Gastrocnemius medialis (tissue), 4 donors: ENCODE measurements at regions of chr19 and their contacts with region 1.

Region 1: DNA sequence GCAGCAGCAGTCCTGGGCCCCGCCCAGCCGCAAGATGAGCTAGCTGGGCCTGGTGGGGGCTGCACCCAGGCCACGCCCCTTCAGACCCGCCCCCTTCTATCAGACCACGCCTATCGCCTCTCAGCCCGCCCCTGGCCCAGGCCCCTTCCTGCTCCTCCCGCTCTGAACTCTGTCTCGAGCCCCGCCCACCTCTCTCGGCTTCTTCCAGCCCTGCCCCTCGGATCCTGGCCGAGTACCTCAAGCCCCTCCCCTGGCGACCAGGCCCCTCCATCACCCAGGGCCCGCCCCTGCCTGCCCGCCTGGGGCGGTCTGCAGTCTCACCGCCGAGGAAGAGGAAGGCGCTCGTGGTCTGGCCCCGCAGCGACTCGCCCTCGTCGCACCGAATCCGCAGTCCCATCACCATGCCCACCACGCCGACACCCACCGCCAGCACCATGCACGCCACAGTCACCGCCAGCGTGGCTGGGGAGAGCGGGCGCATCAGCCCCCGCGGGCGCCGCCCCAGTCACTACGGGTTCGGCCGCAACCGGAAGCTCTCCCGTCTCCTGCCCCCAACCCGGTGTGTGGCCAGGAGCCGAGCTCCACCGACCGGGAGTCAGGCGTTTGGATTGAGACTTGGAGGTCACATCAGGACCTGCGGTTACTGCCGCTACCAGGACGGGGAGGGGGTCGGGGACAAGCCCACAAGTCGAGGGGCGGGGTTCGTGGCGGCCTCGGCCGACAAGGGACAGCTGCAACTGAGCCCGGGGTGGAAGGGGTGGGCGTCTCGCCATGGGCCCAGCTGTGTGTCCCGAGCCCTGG is 1.0 kb downstream of the CLDND2 start:
- DNase-seq: peak; percentile 96 to 98
- ATAC-seq: peak; percentile 64 to 71
- H3K4me3 ChIP-seq: peak overlapping the region; percentile 88 to 95 (median 92)
- H3K27ac ChIP-seq: peak overlapping the region; percentile 91 to 98 (median 94)
- H3K4me1 ChIP-seq: peaks cover 8 to 19% of the 10 kb centered on the region in 2 donors
- H3K27me3 ChIP-seq: no peaks in the 10 kb centered on the region
- CTCF ChIP-seq: no peak
- POLR2A ChIP-seq: no peak

Region 2: DNA sequence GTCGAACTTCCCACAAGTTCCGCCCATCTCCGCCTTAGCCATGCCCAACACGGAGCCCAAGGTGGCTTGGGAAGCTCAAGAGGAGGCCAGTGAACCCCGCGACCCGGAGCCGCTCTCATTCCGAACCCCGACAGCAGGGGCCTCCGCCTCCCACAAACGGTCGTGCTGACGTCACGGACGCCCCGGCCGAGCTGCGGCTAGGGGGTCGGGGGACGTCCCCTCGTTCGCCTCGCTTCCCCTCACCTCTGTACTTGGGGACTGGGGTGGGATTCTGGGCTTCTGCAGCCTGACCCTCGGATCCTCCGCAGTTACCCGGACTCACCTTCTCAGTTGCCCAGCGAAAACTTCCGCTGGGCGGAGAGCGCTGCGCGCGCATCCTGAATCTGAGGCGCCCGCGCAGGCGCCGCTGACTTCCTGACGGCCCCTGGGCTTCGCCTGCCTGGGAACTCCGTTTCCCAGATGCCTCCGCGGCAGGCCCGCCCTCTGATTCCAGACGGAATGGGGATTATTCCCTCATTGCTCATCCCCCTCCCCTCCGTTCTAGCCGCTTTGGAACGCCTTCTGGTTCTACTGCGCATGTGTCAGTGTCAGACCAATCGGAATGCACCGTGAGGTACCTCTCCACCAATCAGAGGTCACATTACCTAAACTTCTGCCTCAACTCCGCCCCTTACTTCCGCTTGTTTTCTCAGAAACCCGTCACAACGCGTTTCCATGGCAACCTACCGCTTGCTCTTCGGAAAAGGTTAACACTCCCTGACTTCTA is 1342.6 kb before region 1 on chr19 and contains the start of gene VRK3:
- in situ Hi-C with region 1: no loop called
- intact Hi-C with region 1: loop called (anchors 5 kb)
- DNase-seq: peak; percentile 99
- ATAC-seq: peak; percentile 99
- H3K4me3 ChIP-seq: peak within 1 kb of the TSS; percentile 93 to 99 (median 96)
- H3K27ac ChIP-seq: peak within 1 kb of the TSS; percentile 90 to 98 (median 94)
- H3K4me1 ChIP-seq: peaks cover 24 to 27% of the 10 kb centered on the region in 2 donors
- H3K27me3 ChIP-seq: no peaks in the 10 kb centered on the region
- CTCF ChIP-seq: no peak
- POLR2A ChIP-seq: peak; percentile 56 to 77
- total RNA-seq, gene VRK3: 36.0 to 52.8 (median 39.9) TPM

Region 3: GRCh38 chr19:50511068-50511822 is 856.5 kb before region 1 on chr19 and contains the start of gene JOSD2:
- in situ Hi-C with region 1: no loop called
- intact Hi-C with region 1: loop called (anchors 5 kb)
- DNase-seq: peak; percentile 95 to 98
- ATAC-seq: peak; percentile 92 to 94
- H3K4me3 ChIP-seq: peak within 1 kb of the TSS; percentile 87 to 92 (median 88)
- H3K27ac ChIP-seq: peak within 1 kb of the TSS; percentile 79 to 89 (median 85)
- H3K4me1 ChIP-seq: peaks cover 7 to 13% of the 10 kb centered on the region in 2 donors
- H3K27me3 ChIP-seq: peaks cover 0 to 4% (median 0%) of the 10 kb centered on the region in 3 donors
- CTCF ChIP-seq: peak in 2 of 5 experiments; percentile 21 to 22
- POLR2A ChIP-seq: peak; percentile 68 to 81
- total RNA-seq, gene JOSD2: 22.1 to 36.9 (median 27.8) TPM

Region 4: DNA sequence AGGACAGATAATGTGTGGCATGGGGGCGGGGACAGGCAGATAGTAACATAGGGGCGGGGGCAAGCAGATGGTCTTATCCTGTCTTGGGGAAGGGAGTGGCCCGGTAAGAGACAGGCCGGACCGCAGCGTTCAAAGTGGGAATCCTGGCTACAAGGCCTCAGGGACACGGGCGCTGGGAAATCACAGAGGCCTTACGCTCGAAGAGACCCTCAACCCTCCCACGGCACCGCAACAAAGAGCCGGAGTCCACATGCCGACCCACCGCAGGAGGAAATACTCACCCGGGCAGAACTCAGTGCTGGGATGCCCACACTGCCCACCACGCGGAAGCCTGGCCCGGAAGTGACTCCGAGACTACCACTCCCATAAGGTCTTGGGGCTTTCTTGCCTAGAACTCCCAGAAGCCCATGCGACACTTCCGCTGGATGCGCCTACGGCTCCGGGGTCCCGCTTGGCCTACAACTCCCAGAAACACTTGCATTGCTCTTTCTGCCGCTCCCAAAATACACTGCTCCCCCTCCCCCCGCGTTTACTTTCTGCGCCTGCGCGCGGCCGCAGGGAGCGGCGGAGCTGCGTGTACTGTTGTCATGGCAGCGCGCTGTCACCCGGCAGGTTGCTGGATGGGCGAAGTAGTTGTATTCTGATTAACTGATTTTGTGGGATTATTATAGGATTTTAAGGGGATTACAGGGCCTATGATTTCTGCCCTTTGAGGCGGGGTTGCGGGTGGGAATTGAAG is 259.5 kb before region 1 on chr19 and contains the start of gene CTU1:
- in situ Hi-C with region 1: no loop called
- intact Hi-C with region 1: loop called (anchors 5 kb)
- DNase-seq: peak; percentile 98 to 99
- ATAC-seq: peak; percentile 100
- H3K4me3 ChIP-seq: peak within 1 kb of the TSS; percentile 65 to 87 (median 76)
- H3K27ac ChIP-seq: peak within 1 kb of the TSS; percentile 68 to 77 (median 74)
- H3K4me1 ChIP-seq: peaks cover 8 to 14% of the 10 kb centered on the region in 2 donors
- H3K27me3 ChIP-seq: no peaks in the 10 kb centered on the region
- CTCF ChIP-seq: peak in 2 of 5 experiments; percentile 24 to 26
- POLR2A ChIP-seq: peak; percentile 34 to 63
- total RNA-seq, gene CTU1: 5.8 to 11.9 (median 9.3) TPM

Region 5: DNA sequence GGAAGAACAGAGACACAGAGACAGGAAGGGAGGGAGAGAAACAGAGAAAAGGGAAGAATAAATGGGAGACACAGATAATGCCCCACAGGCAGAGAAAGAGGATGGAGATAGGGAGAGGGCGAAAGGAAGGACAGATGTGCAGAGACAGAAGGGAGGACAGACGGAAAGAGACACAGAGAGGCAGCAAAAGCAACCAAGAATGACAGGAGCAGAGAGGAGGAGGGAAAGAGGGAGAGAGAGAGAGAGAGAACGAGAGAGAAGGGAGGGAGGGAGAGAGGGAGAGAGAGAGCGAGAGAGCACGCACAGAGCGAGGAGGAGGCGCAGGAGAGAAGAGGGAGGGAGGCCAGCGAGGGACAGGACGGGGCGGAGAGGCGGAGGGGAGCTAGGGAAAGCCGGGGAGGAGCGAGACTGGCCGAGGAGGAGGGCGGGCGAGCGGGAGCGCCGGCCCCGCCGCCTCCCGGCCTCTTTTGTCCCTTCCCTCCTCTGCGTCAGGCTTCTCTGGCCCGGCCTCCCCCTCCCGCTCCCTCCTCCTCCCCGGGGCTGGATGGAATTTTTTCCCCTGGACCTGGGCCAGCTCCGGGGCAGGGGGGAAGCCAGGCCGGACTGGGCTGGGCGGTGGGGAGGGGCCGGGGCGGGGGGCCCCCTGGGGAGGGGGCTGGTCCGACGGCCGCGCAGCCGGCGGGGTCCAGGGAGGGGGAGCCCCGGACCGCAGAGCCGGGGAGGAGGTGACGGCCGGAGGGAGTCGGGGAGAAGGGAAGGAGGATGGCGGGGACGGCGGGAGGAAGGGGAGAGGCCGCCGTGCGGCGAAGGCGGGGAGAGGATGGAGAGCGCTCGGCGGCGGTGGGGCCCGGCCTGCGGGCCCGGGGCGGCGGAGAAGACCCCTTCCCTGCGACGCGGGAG is 321.2 kb after region 1 on chr19:
- in situ Hi-C with region 1: no loop called
- intact Hi-C with region 1: loop called (anchors 10 kb)
- DNase-seq: peak; percentile 72 to 74
- ATAC-seq: peak; percentile 79 to 83
- H3K4me3 ChIP-seq: peak overlapping the region; percentile 71 to 89 (median 82)
- H3K27ac ChIP-seq: peak overlapping the region; percentile 92 to 97 (median 94)
- H3K4me1 ChIP-seq: peaks cover 9 to 16% of the 10 kb centered on the region in 2 donors
- H3K27me3 ChIP-seq: peaks cover 0 to 5% (median 0%) of the 10 kb centered on the region in 3 donors
- CTCF ChIP-seq: peak in 1 of 5 experiments; percentile 29
- POLR2A ChIP-seq: peak in 1 of 2 donors; percentile 69